Pancreas (tissue), 10 donors: ENCODE measurements at regions of chr17 and their contacts with region 1.

Region 1: DNA sequence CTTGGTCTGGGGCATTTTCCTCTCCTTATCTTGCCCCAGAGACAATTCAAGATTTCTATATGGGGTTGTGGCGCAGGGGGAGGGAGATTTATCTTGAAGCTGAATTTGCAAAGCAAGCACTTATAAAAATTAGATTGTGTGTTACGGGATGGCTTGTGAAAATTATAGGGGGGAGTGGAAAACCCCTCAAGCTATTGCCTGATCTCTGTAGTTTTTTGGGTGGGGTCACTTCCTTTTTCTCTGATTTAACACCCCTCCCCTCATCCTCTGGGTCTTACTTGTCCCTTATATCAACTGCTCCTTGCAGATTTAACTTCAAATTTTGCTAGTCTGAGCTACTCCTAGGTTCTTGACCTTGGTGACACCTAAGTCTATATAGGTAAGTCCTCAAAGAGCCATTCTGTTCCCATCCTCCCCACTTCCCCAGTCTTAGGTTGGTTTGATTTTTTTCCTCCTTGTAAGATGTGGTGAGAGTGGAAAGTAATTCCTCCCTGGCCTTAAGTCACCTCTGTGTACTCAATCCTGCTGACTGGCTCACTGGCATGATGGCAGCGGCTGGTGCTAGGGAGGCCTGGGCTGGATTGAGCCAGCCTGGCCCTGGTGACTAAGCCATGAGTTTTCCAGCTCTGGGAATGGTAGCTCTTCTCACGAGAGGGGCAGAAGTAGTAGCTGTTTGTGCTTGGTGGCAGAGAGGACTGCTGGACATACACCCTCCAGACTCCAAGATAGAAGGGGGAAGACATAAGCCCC is 2.3 kb downstream of the ARL4D start:
- DNase-seq: no peak
- ATAC-seq: peak in 2 of 4 donors; percentile 21 to 52
- H3K4me3 ChIP-seq: no peak overlapping the region
- H3K27ac ChIP-seq: no peak overlapping the region
- H3K4me1 ChIP-seq: no peaks in the 10 kb centered on the region
- H3K27me3 ChIP-seq: no peaks in the 10 kb centered on the region
- CTCF ChIP-seq: no peak

Region 2: GRCh38 chr17:43125133-43125966 is 275.8 kb before region 1 on chr17 and contains the start of gene BRCA1:
- intact Hi-C with region 1: no loop called
- DNase-seq: peak; percentile 83 to 96 (median 94)
- ATAC-seq: peak; percentile 94 to 97 (median 96)
- H3K4me3 ChIP-seq: peak within 1 kb of the TSS; percentile 42 to 54 (median 44)
- H3K27ac ChIP-seq: peak within 1 kb of the TSS; percentile 41 to 68 (median 66)
- H3K4me1 ChIP-seq: peaks cover 5 to 13% (median 7%) of the 10 kb centered on the region in 3 donors
- H3K27me3 ChIP-seq: no peaks in the 10 kb centered on the region
- CTCF ChIP-seq: no peak
- total RNA-seq, gene BRCA1: 1.1 to 4.6 (median 2.5) TPM

Region 3: DNA sequence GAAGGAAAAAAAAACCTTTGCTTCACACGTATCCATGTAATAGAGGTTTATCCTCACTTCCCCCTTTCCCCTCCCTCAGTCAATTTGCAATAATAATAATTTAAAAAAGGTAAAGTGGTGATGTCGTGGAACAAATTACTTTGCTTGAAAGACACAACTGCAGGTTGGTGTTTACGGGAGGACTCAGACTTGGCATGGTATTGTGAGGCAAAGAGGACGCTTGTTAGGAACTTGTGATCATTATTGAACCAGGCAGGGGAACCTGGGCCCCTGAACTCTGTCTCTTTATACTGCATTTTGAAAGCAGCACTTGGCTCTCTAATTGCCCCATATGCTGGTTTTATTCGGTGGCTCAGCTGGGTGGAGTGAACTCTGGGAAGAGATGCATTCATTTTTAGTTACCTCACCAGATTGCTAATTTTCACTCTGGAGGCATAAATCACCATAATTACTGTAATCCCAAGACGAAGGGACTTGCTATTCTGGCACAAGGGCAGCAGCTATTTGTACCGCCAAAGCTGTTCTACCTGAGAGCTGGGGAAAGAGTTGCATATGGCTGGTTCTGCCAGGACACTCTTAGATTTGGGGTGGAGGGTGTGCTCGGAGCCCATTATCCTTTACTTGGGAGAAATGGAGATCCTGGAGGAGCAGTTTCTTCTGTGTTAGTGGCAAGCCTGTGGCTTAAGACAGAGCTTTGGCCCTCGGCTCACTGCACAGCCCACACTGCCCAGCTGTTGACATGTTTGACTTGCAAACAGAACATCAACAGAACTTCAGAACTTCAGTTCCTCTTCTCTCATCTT is 76.9 kb after region 1 on chr17:
- intact Hi-C with region 1: loop called in 2 of 3 experiments (anchors 5 to 10 kb)
- DNase-seq: no peak
- ATAC-seq: no peak
- H3K4me3 ChIP-seq: no peak overlapping the region
- H3K27ac ChIP-seq: no peak overlapping the region
- H3K4me1 ChIP-seq: peaks cover 0 to 6% (median 0%) of the 10 kb centered on the region in 3 donors
- H3K27me3 ChIP-seq: no peaks in the 10 kb centered on the region
- CTCF ChIP-seq: no peak

Region 4: DNA sequence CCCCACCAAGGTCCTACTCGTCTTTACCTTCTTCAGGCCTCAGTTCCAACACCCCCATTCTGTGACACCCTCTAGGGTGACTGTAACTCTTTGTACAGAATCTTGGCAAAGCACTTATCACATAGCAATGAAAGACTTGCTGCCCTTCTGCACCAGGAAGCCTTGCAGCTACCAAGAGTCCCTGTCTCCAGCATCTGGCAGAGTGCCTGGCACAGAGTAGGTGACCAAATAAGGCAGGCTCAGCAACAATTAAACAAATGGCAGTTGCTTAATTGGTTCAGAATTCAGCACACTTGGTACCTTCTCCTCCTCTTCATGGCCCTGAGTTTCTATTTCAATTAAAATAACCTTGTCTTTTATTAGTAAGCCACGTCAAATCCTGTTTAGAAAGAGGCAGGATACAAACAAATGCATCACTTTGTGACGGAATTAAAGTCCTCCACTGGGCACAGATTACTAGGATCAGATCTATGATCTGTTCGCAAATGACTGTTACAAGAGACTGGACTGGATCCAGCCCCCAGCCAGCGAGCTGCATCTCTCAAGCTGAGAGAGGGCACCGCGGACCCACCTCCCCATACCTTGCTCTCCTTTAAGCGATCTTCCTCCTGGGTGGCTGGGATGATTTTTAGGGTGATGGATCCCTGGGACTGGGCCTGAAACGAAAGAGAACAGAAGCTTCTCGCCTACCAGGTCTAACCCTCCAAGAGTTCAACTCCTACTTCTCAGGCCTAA is 422.4 kb after region 1 on chr17:
- intact Hi-C with region 1: no loop called
- DNase-seq: no peak
- ATAC-seq: peak in 3 of 4 donors; percentile 22 to 75 (median 65)
- H3K4me3 ChIP-seq: no peak overlapping the region
- H3K27ac ChIP-seq: no peak overlapping the region
- H3K4me1 ChIP-seq: no peaks in the 10 kb centered on the region
- H3K27me3 ChIP-seq: no peaks in the 10 kb centered on the region
- CTCF ChIP-seq: no peak